Caco-2 (cell line): ENCODE measurements at regions of chr10 and their contacts with region 1.

Region 1: DNA sequence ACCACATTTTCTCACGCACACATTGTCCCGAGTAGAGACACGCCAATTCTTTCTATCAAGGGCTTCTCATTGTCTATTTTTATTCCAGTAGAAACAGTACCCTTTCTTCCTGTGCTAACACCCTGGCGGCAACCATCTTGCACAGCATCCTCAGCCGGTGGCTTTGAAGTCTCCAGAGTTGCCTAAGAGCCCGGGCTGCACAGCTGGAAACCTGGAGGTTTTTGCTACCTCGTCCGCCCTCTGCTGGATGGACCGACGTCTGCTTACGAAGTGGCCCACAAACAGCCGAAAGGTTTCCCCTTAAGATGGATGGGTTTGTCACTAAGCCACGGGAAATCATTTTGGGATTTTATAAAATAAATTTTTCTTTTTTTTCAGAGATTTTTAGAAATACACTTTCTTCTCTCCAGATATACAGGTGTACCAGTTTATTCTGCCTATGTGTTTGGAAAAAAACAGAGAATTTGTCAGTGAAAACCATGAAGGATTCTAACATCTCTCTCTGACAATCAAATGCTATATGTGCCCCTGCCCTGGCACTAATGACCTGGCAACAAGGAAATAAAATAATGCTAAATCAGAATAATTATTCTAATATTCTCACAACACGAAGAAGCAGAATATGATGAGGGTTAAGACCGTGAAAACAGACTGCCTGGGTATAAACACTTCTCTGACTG is 81.8 kb upstream of the FAM204A start:
- DNase-seq: peak; percentile 91 to 93
- H3K4me3 ChIP-seq: no peak overlapping the region
- H3K4me3 Mint-ChIP-seq: no peak overlapping the region
- H3K27ac Mint-ChIP-seq: no peak overlapping the region
- H3K4me1 ChIP-seq: no peaks in the 10 kb centered on the region
- H3K4me1 Mint-ChIP-seq: peaks cover 7% of the 10 kb centered on the region
- H3K27me3 ChIP-seq: no peaks in the 10 kb centered on the region
- H3K27me3 Mint-ChIP-seq: peaks cover 12% of the 10 kb centered on the region
- CTCF ChIP-seq: peak; percentile 88 to 91

Region 2: DNA sequence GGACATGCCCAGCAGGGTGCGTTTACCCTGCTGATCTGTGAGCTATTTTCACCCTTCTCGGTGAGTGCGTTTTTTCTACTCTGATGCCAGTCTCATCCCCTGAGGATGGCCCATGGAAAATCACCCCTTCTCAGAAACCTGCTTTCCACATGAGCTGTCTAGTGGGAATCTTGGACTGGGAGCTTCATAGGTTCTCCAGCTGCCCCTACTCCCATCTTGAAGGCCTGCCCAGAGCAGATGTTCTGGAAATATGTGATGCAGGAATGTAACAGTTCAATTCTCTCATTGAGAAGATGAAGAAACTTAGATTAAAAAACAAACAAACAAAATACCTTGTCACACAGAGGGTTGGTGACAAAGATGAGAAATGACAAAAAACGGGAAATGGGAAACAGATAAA is 230.3 kb before region 1 on chr10:
- CTCF ChIA-PET with region 1: no interaction called
- POLR2A ChIA-PET with region 1: no interaction called
- intact Hi-C with region 1: no loop called
- DNase-seq: no peak
- H3K4me3 ChIP-seq: no peak overlapping the region
- H3K4me3 Mint-ChIP-seq: no peak overlapping the region
- H3K27ac Mint-ChIP-seq: no peak overlapping the region
- H3K4me1 ChIP-seq: no peaks in the 10 kb centered on the region
- H3K4me1 Mint-ChIP-seq: no peaks in the 10 kb centered on the region
- H3K27me3 ChIP-seq: no peaks in the 10 kb centered on the region
- H3K27me3 Mint-ChIP-seq: no peaks in the 10 kb centered on the region
- CTCF ChIP-seq: no peak

Region 3: DNA sequence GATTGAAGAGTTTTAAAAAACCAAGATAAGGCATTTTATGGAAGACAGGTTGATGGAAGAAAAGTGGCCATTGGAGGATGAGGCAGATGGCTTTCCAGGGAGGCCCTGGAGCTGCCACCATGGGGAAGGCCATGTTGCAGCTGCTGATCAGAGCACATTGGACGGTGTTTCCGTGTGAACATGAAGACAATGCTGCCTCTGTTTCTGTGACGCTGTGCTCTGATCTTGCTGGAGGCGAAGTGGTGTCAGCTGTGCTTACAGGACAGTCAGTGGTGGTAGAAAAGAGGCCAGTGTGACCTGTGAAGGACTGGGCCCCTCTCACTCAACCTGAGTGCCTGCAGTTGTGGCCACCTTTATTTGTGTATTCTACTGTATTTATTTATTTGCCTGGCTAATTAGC is 214.7 kb before region 1 on chr10:
- CTCF ChIA-PET with region 1: no interaction called
- POLR2A ChIA-PET with region 1: no interaction called
- intact Hi-C with region 1: no loop called
- DNase-seq: no peak
- H3K4me3 ChIP-seq: no peak overlapping the region
- H3K4me3 Mint-ChIP-seq: no peak overlapping the region
- H3K27ac Mint-ChIP-seq: no peak overlapping the region
- H3K4me1 ChIP-seq: no peaks in the 10 kb centered on the region; the same call in 1 of the 2 replicates
- H3K4me1 Mint-ChIP-seq: peaks cover 6% of the 10 kb centered on the region
- H3K27me3 ChIP-seq: no peaks in the 10 kb centered on the region
- H3K27me3 Mint-ChIP-seq: no peaks in the 10 kb centered on the region
- CTCF ChIP-seq: no peak

Region 4: GRCh38 chr10:118341791-118342637 is 81.9 kb before region 1 on chr10 and contains the start of gene FAM204A:
- CTCF ChIA-PET with region 1: no interaction called
- POLR2A ChIA-PET with region 1: no interaction called
- intact Hi-C with region 1: loop called (anchors 1 kb)
- DNase-seq: peak; percentile 93 to 95
- H3K4me3 ChIP-seq: peak within 1 kb of the TSS; percentile 79
- H3K4me3 Mint-ChIP-seq: peak within 1 kb of the TSS; percentile 84
- H3K27ac Mint-ChIP-seq: peak within 1 kb of the TSS; percentile 93
- H3K4me1 ChIP-seq: 0 out of 2 replicates have a peak, but pooled peaks cover 3% of the 10 kb centered on the region
- H3K4me1 Mint-ChIP-seq: no peaks in the 10 kb centered on the region
- H3K27me3 ChIP-seq: no peaks in the 10 kb centered on the region
- H3K27me3 Mint-ChIP-seq: peaks cover 3% of the 10 kb centered on the region
- CTCF ChIP-seq: no peak
- total RNA-seq, gene FAM204A: 63.7 and 68.7 TPM in 2 replicates